ENCODE measurements at regions of chr2 and their contacts with region 1.

Region 1: DNA sequence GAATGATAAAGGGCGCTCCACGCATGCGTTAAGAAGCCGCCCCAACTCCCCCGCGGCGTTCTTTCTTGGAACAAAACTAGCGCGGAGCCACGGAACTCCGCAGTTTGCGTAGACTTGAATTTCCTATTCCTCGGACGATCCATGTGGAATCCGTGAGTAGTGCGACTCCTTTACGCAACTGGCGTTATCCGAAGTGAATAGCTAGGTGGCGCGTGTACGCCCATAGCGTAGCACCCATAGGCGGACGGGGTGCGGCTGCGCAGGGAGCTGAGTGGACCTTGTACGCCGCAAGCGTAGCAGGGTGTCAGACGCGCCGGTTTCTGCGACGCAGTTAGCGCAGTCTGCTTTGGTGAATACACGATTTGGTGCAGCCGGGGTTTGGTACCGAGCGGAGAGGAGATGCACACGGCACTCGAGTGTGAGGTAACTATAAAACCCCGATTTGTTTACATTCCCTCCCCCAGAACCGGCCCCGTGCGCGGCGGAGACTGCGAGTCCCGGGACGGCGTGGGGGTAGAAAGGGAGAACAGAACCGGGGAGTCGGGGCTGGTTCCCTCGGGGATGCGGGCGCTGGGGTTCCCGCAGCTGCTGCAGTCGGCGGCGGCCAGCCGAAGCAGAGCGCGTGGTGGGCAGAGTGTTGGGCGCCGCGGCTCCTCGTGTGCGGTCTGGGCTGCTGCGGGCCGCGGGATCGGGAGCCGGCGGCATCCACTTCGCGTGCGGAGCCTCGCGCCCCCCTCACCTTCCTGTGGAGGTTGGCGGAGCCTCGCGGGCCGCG is at the start of gene SLC39A10:
- DNase-seq: peak; percentile 97
- H3K4me3 ChIP-seq: peak within 1 kb of the TSS; percentile 93
- H3K27ac ChIP-seq: peak within 1 kb of the TSS; percentile 66
- H3K4me1 ChIP-seq: peaks cover 21% of the 10 kb centered on the region
- CTCF ChIP-seq: peak; percentile 35; the same call in 1 of the 2 replicates
- total RNA-seq, gene SLC39A10: 14.7 and 19.6 TPM in 2 replicates

Region 2: DNA sequence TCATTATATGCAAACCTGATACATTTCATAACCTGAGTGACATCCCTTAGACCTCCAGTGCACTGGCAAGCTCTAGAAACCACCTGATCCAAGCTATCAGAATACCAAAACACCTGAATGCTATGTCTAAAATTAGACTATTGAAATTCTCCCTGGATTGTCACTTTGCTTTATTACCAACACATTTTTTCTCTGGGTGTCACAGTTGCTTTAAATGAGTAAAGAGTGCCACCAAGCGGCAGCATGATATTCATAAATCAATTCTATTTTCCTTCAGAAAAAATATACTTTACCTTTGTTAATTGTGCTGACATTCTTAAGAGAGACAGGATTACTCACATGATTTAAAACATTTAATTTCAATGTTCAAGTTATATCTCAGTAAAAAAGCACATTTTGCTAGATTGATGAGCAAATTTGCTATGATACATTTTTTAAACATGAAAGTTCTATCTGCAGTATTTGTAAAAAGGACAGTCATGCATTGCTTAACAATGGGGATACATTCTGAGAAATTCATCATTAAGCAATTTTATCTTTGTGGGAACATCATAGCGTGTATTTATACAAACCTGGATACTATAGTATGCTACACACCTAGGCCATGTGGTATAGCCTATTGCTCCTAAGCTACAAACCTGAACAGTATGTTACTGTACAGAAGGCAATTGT is 338.5 kb before region 1 on chr2:
- CTCF ChIA-PET with region 1: no interaction called
- POLR2A ChIA-PET with region 1: no interaction called
- intact Hi-C with region 1: loop called (anchors 1 kb)
- DNase-seq: peak; percentile 65
- H3K4me3 ChIP-seq: no peak overlapping the region
- H3K27ac ChIP-seq: no peak overlapping the region
- H3K4me1 ChIP-seq: no peaks in the 10 kb centered on the region
- CTCF ChIP-seq: peak; percentile 96

Region 3: GRCh38 chr2:195404651-195405050 is 252.4 kb before region 1 on chr2:
- CTCF ChIA-PET with region 1: interaction called, 3 read pairs
- POLR2A ChIA-PET with region 1: interaction called, 3 read pairs
- intact Hi-C with region 1: loop called (anchors 1 kb)
- DNase-seq: peak; percentile 25
- H3K4me3 ChIP-seq: no peak overlapping the region
- H3K27ac ChIP-seq: no peak overlapping the region
- H3K4me1 ChIP-seq: no peaks in the 10 kb centered on the region
- CTCF ChIP-seq: peak; percentile 73

Region 4: DNA sequence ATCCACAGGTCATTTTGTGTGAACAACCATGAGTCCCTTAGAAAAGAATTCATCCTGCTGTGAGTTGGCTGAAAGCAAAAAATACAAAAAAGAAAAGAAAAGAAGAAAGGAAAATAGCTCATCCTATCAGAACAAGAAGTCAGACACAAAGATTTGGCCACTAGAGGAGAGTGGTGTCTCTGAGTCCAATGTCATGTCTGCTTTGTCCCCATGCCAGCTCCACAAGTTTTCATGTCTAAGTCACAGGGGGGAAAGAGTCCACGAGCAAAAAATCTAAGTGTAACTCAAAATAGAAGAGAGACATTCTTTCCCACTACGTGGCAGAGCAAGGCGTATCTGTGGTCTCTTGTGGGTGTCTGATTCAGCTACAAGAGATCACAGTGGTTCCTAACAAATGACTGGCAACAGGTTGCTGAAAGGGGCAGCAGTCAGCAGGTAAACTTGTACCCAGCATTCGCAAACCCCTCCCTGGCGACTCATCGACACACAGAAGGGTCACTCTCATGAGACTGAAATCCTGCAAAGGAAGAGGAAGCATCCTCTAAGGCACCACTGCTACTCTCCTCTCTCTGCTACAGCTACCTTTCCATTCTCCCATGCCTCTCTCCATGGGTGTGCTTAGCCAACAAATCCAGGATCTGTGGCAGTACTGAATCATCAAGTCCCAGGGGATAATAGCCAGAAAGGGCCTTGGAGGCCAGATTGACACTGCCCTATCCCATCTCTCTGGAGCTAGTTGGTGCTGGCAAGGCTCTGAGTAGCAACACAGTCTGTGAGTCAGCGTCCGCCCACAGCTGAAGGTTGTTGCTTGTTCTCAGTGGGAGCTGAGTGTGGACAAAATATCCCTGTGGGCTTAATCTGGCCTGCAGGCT is 123.0 kb before region 1 on chr2:
- CTCF ChIA-PET with region 1: interaction called, 5 read pairs
- POLR2A ChIA-PET with region 1: interaction called, 10 read pairs
- intact Hi-C with region 1: loop called (anchors 1 kb)
- DNase-seq: peak; percentile 39
- H3K4me3 ChIP-seq: peak overlapping the region; percentile 64
- H3K27ac ChIP-seq: no peak overlapping the region
- H3K4me1 ChIP-seq: peaks cover 47% of the 10 kb centered on the region
- CTCF ChIP-seq: peak; percentile 53

Region 5: DNA sequence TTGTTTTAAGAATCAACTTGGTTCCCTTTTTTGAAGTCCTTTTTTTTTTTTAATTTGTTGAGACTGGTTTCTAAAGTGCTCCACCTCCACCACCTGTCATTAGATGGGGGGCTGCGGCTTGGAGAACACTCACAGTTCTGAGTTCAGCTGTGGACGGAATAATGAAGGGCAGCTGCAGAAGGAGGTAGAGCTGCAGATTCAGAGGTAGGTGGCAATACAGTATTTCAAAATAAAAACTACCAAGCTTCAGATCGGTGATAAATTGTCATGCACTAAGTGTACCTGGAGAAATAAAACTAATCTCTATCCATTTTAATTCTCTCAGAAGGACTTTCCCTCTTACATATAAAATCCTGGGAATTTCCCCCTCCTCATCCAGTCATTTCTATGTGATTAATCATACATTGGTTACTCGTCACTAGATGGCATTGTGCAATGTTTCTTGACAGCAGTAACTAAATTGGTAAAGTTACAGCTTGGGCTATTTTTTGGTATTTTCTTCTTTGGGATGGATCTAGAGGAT is 81.1 kb before region 1 on chr2:
- CTCF ChIA-PET with region 1: interaction called, 20 read pairs
- POLR2A ChIA-PET with region 1: interaction called, 14 read pairs
- intact Hi-C with region 1: loop called (anchors 1 kb)
- DNase-seq: peak; percentile 80
- H3K4me3 ChIP-seq: peak overlapping the region; percentile 17
- H3K27ac ChIP-seq: peak overlapping the region; percentile 37
- H3K4me1 ChIP-seq: peaks cover 39% of the 10 kb centered on the region
- CTCF ChIP-seq: peak; percentile 90

Region 6: DNA sequence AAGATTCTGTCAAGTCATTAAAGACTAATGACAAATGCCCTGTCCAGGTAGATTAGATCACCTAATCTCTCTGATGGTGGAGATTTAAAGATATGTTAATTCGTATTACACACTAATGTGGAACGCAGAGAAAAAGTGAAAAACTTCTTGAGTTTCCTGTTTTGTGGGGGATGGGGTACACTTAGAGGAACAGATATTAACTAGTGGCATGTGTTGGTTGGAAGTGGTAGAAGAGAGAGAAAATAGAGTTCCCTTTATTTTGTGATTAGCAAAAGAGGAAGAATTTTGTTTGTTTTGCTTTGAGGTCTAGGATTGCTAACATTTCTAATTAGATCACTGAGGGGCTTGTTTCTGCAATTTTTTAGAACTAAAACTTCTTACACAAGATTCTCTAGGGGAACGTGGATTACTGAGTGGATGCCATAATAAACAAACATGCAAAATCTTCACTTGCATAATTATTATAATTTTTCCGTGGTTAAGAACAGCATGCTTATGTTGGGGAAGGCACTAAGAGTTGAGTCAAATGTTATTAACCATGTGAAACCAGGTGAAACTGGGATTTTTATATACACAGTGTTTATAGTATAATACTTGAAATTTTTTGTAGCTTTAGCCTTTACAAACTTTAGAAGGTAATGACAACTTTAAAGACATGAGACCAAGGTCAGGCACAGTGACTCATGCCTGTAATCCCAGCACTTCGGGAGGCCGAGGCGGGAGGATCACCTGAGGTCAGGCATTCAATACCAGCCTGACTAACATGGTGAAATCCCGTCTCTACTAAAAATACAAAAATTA is 611.7 kb after region 1 on chr2:
- CTCF ChIA-PET with region 1: no interaction called
- POLR2A ChIA-PET with region 1: no interaction called
- intact Hi-C with region 1: loop called (anchors 5 kb)
- DNase-seq: peak; percentile 48
- H3K4me3 ChIP-seq: peak overlapping the region; percentile 36
- H3K27ac ChIP-seq: peak overlapping the region; percentile 66
- H3K4me1 ChIP-seq: peaks cover 89% of the 10 kb centered on the region
- CTCF ChIP-seq: no peak

Region 7: DNA sequence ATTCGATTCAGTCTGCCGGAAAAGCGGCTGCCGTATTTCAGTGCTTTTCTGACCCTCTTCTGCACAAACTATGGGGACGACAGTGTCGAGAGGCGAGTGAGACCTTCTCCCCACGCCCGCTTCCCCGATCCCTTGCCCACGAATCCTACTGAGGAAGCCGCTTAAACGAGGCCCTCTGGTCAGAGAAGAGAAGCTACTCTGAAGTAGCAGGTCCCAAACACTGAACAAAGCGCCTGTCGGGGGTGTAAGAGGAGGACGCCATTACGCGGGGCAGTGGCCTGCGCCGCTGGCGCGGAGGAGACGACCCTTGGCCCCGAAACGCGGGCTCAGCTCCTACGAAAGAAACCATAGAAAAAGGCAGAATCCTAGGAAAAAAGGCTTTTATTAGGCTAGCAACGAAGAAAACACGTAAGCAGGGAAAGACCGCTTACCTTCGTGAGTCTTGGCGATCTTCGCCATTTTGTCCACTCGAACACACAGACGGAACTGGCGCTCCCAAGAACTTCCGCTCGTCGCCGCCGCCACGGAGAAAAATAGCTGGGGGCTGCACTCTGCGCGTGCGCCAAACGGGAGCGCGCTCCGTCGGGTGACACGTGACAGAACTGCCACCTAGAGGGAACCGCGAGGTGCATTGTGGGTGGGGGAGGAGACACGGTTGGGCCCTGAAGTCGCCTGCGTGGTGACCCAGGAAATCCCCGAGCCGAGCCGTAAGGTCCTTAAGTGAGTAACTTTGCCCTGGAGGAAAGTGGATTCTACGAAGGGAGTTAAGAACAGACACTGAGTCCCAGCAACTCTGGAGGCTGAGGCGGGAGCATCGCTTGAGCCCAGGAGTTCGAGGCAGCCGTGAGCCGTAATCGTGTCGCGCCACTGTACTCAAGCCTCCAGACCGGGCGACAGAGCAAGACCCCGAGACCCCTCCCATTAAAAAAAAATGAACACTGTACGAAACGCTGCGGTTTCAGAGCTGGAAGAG is 1777.8 kb after region 1 on chr2 and contains the start of gene SF3B1:
- CTCF ChIA-PET with region 1: no interaction called
- POLR2A ChIA-PET with region 1: no interaction called
- intact Hi-C with region 1: loop called (anchors 10 kb)
- DNase-seq: peak; percentile 99
- H3K4me3 ChIP-seq: peak within 1 kb of the TSS; percentile 99
- H3K27ac ChIP-seq: peak within 1 kb of the TSS; percentile 76
- H3K4me1 ChIP-seq: peaks cover 42% of the 10 kb centered on the region
- CTCF ChIP-seq: no peak
- total RNA-seq, gene SF3B1: 162 and 198 TPM in 2 replicates

Measured in OCI-LY7 (cell line).